ENCODE measurements at regions of chr7 and their contacts with region 1.

Region 1: GRCh38 chr7:105759670-105760550 is 116.5 kb downstream of the ATXN7L1 start:
- DNase-seq: peak in 2 of 3 donors; percentile 40 to 82
- ATAC-seq: peak; percentile 37
- H3K4me3 ChIP-seq: no peak overlapping the region
- H3K4me1 ChIP-seq: no peaks in the 10 kb centered on the region
- CTCF ChIP-seq: no peak

Region 2: DNA sequence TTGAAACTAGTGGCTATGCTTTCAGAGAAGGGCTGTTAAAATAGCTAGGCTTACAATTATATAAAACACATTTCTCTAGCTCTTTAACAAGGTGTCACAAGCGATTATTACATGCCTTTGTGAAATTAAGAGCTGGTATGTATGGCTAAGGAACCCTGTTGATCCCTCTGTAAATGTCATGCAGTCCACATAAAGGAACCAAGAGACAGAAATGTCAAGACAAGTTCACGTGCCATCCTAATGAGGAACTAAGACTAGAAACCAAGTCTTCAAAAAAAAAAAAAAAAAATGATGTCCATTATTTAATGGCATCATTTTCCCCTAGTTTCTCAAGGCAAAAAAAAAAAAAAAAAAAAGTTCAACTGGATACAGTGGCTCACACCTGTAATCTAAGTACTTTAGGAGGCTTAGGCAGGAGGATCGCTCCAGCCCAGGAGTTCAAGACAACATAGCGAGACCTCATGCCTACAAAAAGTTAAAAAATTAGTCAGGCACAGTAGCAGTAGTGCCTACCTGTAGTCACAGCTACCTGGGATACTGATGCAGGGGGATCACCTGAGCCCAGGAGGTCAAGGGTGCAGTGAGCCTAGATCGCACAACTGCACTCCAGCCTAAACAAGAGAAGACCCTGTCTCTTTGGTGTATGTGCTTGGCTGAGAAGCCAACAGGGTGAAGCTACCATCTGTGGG is 434.6 kb before region 1 on chr7:
- intact Hi-C with region 1: no loop called
- DNase-seq: no peak
- ATAC-seq: no peak
- H3K4me3 ChIP-seq: no peak overlapping the region
- H3K4me1 ChIP-seq: no peaks in the 10 kb centered on the region
- CTCF ChIP-seq: no peak

Region 3: DNA sequence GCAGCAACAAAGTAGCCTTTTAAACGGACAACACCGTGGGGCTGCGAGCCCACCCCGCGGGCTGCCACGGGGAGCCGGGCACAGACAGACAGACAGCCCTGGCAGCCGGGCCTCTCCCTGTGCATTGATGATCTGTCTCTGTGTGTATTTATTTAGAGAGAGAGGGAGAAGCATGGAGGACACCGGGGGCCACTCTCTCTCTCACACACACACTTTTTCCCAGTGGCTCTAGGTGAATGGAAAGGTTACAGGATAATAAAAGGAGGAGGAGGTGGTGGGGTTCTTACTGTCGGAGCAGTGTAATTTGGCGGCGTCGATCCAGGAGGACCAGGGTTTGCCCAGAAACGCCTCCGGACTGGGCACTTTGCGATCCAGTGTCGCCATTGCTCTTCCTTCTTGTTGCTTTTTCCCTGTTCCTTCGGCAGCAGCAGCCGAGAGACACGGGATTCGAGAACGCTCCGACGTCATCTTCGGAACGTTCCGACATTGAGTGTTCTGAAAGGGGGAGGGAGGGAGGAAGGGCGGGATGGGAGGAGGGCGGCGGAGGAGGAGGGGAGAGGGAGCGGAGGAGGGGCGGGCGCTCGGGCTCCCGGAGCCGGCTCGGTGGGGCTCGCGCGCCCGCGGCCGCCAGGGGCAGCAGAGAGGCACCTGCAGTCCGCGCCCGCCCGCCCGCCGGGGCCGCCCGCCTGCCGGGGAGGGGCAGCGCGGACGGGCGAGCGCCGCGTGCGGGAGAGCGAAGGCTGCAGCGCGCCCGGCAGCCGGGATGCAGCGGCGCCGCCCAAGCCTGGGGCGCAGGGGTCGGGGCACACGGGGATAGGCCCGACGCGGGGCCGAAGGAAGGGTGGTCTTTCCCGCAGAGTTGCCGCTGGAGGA is 116.4 kb after region 1 on chr7 and contains the start of gene ATXN7L1:
- intact Hi-C with region 1: loop called in 1 of 2 experiments (anchors 10 kb)
- DNase-seq: peak; percentile 94 to 97 (median 96)
- ATAC-seq: peak; percentile 95
- H3K4me3 ChIP-seq: peak within 1 kb of the TSS; percentile 51
- H3K4me1 ChIP-seq: peaks cover 20% of the 10 kb centered on the region
- CTCF ChIP-seq: peak; percentile 78
- total RNA-seq, gene ATXN7L1: 19.7 to 29.5 (median 26.0) TPM

Measured in mucosa of descending colon (tissue), 3 donors.